ENCODE measurements at regions of chr3 and their contacts with region 1.

Region 1: DNA sequence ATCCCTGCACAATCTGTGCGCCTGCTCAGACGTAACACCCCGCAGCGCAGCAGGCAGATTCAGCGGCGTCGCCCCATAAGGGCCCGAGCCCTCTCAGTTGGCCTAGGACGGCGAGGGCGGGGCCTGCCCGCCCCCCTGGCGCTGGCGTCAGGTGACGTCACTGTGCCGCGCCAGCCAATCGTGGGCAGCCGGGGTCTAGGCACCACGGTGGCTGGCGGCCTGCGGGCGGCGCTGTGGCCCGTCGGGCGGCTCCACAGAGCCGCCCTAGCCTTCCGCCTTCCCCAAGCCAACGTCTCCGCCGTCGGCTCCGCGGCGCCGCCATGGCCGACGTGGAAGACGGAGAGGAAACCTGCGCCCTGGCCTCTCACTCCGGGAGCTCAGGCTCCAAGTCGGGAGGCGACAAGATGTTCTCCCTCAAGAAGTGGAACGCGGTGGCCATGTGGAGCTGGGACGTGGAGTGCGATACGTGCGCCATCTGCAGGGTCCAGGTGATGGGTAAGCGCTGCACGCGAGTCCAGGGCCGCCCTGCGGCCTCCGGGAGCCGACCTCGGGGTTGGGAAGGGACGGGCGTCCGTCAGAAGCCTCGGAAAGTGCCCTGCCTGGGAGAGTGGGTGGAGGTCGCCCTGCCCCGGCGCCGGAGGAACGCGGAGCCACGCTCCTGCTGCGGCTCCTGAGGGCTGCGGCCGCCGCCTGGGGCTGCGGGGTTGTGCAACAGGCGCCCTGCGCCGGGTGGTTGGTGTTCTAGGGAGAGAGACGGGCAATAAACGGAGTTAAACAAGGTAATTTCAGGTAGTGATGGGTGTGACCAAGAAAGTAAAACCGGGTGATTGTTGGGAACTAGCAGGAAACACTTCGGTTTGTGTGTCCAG is at the start of gene RNF7:
- DNase-seq: peak; percentile 98
- ATAC-seq: peak; percentile 98
- total RNA-seq, gene RNF7: 85.0 TPM

Region 2: DNA sequence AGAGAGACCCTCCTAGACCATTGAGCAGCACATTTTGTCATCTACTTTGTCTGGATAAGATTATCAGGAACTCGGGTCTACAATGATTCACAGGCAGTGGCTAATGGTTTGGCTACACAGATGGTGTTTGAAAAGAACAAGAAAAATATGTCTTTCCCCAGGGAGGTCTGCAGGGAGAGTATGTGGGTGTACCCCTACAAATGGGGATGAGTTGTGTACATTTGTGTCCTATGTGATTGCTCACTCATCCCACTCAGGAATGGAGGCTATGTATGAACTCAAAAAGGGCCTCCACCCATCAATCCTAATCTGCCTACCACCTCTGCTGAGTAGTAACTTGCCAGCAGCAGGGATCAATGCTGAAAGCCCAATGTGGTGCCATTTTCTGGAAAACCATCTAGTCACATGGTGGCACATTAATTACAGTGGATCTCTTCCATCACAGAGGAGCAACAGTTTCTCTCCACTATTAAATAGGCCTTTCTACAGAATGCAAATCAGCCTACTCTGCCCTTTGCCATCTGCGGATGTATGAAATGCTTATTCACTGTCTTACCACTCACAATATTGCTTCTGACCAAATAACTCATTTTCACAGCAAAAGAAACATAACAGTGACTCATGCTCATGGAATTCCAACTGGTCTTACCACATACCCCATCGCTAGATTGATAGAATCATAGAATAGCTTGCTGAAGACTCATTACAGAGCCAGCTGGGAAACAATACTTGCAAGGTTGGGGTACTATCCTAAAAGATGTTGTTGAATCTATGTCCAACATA is 1108.7 kb before region 1 on chr3:
- intact Hi-C with region 1: no loop called
- DNase-seq: no peak
- ATAC-seq: no peak

Region 3: GRCh38 chr3:141875374-141875892 is 137.2 kb after region 1 on chr3:
- intact Hi-C with region 1: loop called (anchors 5 kb)
- DNase-seq: peak; percentile 88
- ATAC-seq: peak; percentile 90

Region 4: GRCh38 chr3:141913150-141913811 is 175.0 kb after region 1 on chr3:
- intact Hi-C with region 1: loop called (anchors 5 kb)
- DNase-seq: no peak
- ATAC-seq: peak; percentile 66

Measured in left ventricle myocardium superior (tissue), 1 donor.